AG04449 (cell line): ENCODE measurements at regions of chr16 and their contacts with region 1.

Region 1: DNA sequence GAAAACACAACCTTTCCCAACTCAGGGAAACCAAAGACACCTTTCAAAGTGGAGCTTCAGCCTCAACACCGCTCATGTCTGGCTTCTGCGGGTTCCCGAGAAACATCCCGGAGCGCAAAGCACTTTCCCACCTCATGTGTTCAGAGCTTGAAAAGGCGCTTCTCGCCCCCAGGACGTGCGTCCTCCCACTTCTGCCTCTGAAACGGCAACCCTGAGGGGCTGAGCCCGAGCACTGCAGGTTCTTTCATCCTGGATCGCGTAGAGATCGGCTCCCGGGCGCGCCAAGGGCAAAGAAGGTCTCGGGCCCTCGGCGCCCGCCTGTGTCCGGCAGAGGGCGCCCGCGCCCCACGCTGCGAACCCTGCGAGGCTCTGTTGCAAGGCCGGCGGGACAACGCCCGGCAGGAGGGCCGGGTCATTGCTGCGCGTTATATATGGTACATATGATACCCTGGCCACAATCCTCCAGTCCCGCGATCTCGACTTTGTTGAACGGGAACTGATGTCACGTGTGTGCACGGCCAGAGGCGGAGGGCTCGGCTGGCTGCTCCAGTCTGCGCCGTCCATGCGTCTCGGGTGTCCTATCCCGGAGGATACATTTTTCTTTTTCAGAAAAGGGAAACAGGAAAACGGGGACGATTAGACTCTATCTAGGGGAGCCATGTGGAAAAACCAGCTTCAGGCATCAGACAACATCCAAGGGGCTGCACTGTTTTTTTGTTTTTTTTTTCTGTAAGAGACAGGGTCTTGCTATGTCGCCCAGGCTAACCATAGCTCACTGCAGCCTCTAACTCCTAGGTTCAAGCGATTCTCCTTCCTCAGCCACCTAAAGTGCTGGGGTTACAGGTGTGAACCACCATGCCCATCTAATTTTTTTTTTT is 19.1 kb downstream of the COQ7 start:
- DNase-seq: peak; percentile 14
- H3K4me3 ChIP-seq: peak overlapping the region; percentile 63
- CTCF ChIP-seq: peak; percentile 98

Region 2: DNA sequence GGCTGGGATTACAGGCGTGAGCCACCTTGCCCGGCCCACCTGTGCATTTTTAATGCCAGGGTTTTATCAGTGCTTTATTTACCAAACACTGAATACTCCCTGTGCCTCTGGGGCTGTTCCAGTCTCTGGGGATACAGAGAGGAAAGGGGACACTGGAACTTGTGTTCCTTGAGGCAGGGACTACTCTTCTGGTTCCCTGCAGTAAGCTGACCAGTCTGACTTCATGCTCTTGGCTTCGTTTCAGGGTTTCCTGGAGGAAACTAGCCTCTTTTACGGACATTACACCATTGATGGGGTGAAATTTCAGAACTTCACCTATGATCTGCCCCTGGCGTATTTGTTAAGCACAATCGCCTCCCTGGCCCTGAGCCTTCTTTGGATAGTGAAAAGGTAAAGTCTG is 56.6 kb before region 1 on chr16:
- CTCF ChIA-PET with region 1: no interaction called
- POLR2A ChIA-PET with region 1: no interaction called
- DNase-seq: no peak
- H3K4me3 ChIP-seq: no peak overlapping the region
- CTCF ChIP-seq: no peak

Region 3: GRCh38 chr16:19067349-19068236 is 19.0 kb before region 1 on chr16 and contains the start of gene COQ7:
- CTCF ChIA-PET with region 1: interaction called, 14 read pairs
- POLR2A ChIA-PET with region 1: no interaction called
- DNase-seq: peak; percentile 99
- H3K4me3 ChIP-seq: peak within 1 kb of the TSS; percentile 78
- CTCF ChIP-seq: no peak

Region 4: DNA sequence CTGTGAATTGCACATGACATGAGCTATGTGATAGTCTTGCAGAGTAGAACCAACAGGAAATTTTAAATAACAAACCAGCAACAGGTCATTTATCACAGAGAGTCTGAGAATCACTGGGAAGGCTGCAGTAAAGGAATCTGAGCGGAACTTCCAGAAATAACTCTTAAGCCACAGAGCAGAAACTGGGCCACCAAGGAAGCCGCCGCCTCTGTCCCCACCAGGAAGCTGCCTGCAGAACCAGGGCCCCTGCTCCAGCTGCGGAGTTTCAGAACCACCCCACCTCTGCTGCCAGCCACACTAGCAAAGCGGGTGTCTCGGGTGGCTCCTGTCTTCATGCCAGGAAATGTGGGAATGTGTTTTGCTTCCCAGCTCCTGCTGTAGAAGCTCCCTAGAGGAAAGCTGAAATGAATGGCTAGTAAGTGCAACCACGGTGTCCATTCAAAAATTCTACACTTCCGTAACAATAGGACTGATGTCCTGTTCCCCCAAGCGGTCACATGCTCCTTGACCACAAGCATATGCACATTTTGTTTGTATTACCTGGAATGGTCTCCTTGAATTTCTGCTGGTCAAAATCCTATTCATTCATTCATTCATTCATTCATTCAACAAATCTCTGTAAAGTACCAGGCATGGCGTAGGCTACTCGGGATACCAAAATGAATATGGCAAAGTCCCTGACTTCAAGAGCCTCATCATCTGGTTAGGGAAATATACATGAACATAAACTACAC is 19.5 kb after region 1 on chr16:
- CTCF ChIA-PET with region 1: interaction called, 26 read pairs
- POLR2A ChIA-PET with region 1: no interaction called
- DNase-seq: no peak
- H3K4me3 ChIP-seq: no peak overlapping the region
- CTCF ChIP-seq: no peak

Region 5: GRCh38 chr16:19118938-19119431 is 32.4 kb after region 1 on chr16:
- CTCF ChIA-PET with region 1: interaction called, 24 read pairs
- POLR2A ChIA-PET with region 1: interaction called, 3 read pairs
- DNase-seq: peak; percentile 72
- H3K4me3 ChIP-seq: peak overlapping the region; percentile 64
- CTCF ChIP-seq: no peak

Region 6: DNA sequence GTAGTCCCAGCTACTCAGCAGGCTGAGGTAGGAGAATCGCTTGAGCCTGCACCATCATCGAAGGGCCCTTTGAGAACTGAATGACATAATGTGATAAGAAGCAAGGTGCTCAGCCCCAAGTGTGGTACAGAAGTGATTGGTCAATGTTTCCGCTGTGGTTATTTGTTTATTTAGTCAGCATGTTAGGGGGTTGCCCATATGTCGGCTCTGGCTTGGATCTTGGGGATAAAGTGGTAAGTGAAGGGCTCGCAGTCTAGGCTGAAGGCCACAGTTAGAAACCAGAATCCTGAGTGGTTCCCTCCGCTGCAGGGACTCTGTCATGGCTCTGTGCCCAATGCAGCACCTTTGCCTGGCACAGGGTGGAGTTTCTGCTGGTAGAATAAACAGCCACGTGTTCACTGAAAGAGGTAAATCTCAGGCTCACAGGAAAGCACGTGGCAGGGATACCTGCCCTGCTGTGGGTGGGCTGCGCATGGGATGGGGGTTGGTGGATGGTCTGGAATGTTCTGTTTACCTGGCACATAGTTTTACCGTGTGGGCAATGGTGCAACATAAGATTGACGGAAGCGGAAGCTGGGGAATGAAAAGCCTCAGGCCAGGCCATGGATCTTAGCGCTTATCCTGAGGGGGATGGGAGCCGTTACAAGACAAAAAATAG is 116.9 kb after region 1 on chr16:
- CTCF ChIA-PET with region 1: no interaction called
- POLR2A ChIA-PET with region 1: no interaction called
- DNase-seq: no peak
- H3K4me3 ChIP-seq: no peak overlapping the region
- CTCF ChIP-seq: no peak

Region 7: DNA sequence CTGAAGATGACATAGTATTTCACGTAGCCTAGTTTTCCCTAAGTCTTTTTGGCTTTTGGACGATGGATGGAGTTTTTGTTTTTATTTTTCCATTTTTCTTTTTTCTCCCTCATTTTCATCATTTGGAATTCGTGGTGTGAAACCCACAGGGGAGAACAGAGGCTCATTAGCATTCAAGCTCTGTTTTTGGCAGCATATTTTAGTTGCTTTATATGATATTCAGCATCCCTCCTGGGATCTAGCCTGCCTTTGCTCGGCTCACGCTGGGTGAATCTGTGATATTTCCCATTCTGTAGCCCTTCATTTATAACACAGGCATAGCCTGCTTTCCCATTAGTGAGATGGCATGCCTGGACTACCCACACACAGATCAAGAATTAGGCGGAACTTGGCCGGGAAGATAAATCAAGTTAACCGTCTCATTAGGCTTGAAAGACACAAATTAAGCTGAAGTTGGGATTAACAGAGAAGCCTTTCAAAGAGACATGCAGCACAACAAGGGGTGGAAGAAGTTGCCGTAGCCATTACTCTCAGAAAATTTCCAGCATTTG is 178.9 kb after region 1 on chr16:
- CTCF ChIA-PET with region 1: no interaction called
- POLR2A ChIA-PET with region 1: no interaction called
- DNase-seq: no peak
- H3K4me3 ChIP-seq: no peak overlapping the region
- CTCF ChIP-seq: no peak

Region 8: DNA sequence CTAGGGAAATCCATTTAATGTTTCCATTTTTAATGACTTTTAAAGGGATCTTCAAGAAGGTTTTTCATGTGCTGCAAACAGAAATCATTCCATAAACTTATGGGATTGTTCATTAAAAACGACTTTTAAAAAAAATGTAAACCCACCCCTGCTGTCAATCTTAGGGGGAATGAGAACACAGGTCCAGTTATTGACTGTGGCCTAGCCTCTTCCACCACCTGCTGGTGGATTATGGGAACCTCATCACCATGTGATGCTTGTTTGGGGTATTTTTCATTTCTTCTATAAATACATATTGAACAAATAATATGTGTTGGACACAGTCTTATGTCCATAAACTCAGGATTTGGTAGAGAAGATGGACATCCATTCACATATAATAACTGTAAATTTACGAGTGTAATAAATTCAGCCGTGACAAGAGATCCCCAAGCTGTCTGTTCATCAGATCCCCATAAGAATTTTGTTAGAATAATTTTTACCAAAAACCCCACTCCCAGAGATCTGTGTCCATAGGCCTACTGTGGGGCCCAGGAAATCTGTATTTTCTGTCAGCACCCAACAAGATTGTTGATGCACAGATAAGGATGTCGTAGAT is 289.1 kb after region 1 on chr16:
- CTCF ChIA-PET with region 1: interaction called, 88 read pairs
- POLR2A ChIA-PET with region 1: no interaction called
- DNase-seq: no peak
- H3K4me3 ChIP-seq: no peak overlapping the region
- CTCF ChIP-seq: peak; percentile 59

Region 9: DNA sequence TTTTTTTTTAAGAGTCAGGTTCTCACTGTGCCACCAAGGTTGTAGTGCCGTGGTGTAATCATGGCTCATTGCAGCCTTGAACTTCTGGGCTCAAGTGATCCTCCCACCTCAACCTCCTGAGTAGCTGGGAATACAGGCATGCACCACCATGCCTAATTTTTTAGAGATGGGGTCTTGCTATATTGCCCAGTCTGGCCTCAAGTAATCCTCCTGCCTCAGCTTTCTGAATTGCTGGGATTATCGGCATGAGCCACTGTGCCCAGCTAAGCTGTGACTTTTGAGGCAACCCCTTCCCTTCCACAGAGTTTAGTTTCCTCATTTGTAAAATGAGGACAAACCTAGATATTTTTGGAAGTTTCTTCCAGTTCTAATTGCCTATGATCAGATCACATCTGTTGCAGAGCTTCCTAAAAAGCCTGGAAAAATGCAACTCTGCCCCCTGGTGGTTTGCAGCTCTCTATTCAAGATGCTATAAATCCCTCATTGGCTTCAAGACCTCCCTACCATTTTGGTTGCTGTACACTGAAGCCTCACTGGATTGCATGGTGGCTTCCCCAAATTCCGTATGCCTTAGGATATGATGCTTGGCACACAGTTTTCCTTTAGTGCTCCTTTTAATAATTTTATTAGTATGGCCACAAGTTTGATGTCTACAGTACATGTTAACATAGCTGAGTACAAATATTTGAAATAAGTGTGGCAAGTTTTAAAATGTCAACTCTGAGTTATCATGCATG is 416.0 kb after region 1 on chr16:
- CTCF ChIA-PET with region 1: interaction called, 102 read pairs
- POLR2A ChIA-PET with region 1: no interaction called
- DNase-seq: no peak
- H3K4me3 ChIP-seq: no peak overlapping the region
- CTCF ChIP-seq: peak; percentile 68